PC-3 (cell line): ENCODE measurements at regions of chr14 and their contacts with region 1.

Region 1: DNA sequence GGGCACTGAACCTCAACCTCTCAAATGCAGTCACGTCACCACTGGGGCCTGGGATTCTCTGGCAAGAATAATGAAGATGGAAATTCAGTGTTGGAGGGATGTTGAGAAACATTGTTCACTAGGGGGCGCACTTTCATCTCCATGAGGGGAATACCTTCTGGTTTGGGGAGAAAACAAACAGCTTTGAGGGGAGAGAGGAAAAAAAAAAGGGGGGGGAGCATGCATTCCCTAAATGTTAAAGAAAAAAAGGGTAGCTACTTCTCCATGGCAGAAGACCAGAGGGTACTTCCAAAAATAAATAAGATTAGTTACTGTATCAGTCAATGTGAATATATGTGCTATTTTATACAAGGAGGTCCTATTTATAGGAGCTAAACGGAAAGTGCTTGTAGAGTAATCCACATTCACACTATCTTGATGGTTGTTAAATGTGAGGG is 5.8 kb upstream of the TBPL2 start:
- DNase-seq: peak; percentile 99
- ATAC-seq: peak; percentile 7
- H3K4me3 ChIP-seq: peak overlapping the region; percentile 22; the same call in 1 of the 2 replicates
- H3K27ac ChIP-seq: peak overlapping the region; percentile 81
- H3K4me1 ChIP-seq: peaks cover 54% of the 10 kb centered on the region
- H3K27me3 ChIP-seq: no peaks in the 10 kb centered on the region
- CTCF ChIP-seq: peak; percentile 99

Region 2: GRCh38 chr14:55458800-55459515 is 12.7 kb after region 1 on chr14:
- CTCF ChIA-PET with region 1: interaction called, 4 read pairs
- POLR2A ChIA-PET with region 1: no interaction called
- intact Hi-C with region 1: loop called (anchors 1 kb)
- DNase-seq: peak; percentile 97
- ATAC-seq: peak; percentile 63
- H3K4me3 ChIP-seq: peak overlapping the region; percentile 12
- H3K27ac ChIP-seq: peak overlapping the region; percentile 74
- H3K4me1 ChIP-seq: peaks cover 49% of the 10 kb centered on the region
- H3K27me3 ChIP-seq: no peaks in the 10 kb centered on the region
- CTCF ChIP-seq: no peak

Region 3: GRCh38 chr14:55500219-55500701 is 54.0 kb after region 1 on chr14:
- CTCF ChIA-PET with region 1: no interaction called
- POLR2A ChIA-PET with region 1: no interaction called
- intact Hi-C with region 1: no loop called
- DNase-seq: no peak
- ATAC-seq: no peak
- H3K4me3 ChIP-seq: no peak overlapping the region
- H3K27ac ChIP-seq: no peak overlapping the region
- H3K4me1 ChIP-seq: no peaks in the 10 kb centered on the region
- H3K27me3 ChIP-seq: no peaks in the 10 kb centered on the region
- CTCF ChIP-seq: no peak

Region 4: GRCh38 chr14:55556929-55557623 is 110.8 kb after region 1 on chr14:
- CTCF ChIA-PET with region 1: no interaction called
- POLR2A ChIA-PET with region 1: no interaction called
- intact Hi-C with region 1: no loop called
- DNase-seq: peak; percentile 99
- ATAC-seq: peak; percentile 66
- H3K4me3 ChIP-seq: no peak overlapping the region
- H3K27ac ChIP-seq: no peak overlapping the region
- H3K4me1 ChIP-seq: peaks cover 19% of the 10 kb centered on the region
- H3K27me3 ChIP-seq: no peaks in the 10 kb centered on the region
- CTCF ChIP-seq: no peak

Region 5: GRCh38 chr14:55572578-55572977 is 126.3 kb after region 1 on chr14:
- CTCF ChIA-PET with region 1: interaction called, 5 read pairs
- POLR2A ChIA-PET with region 1: no interaction called
- intact Hi-C with region 1: loop called (anchors 1 kb)
- DNase-seq: peak; percentile 46
- ATAC-seq: peak; percentile 53
- H3K4me3 ChIP-seq: no peak overlapping the region
- H3K27ac ChIP-seq: no peak overlapping the region
- H3K4me1 ChIP-seq: peaks cover 18% of the 10 kb centered on the region
- H3K27me3 ChIP-seq: no peaks in the 10 kb centered on the region
- CTCF ChIP-seq: peak; percentile 28; the same call in 1 of the 2 replicates

Region 6: GRCh38 chr14:55579724-55580469 is 133.7 kb after region 1 on chr14 and contains the start of gene KTN1:
- CTCF ChIA-PET with region 1: interaction called, 9 read pairs
- POLR2A ChIA-PET with region 1: interaction called, 6 read pairs
- intact Hi-C with region 1: loop called (anchors 1 kb)
- DNase-seq: peak; percentile 97
- ATAC-seq: peak; percentile 85
- H3K4me3 ChIP-seq: peak within 1 kb of the TSS; percentile 82
- H3K27ac ChIP-seq: peak within 1 kb of the TSS; percentile 68
- H3K4me1 ChIP-seq: peaks cover 53% of the 10 kb centered on the region
- H3K27me3 ChIP-seq: no peaks in the 10 kb centered on the region
- CTCF ChIP-seq: no peak
- total RNA-seq, gene KTN1: 249 and 251 TPM in 2 replicates

Region 7: GRCh38 chr14:55599200-55599879 is 153.1 kb after region 1 on chr14:
- CTCF ChIA-PET with region 1: interaction called, 3 read pairs
- POLR2A ChIA-PET with region 1: interaction called, 4 read pairs
- intact Hi-C with region 1: loop called (anchors 1 kb)
- DNase-seq: peak; percentile 95
- ATAC-seq: peak; percentile 61
- H3K4me3 ChIP-seq: peak overlapping the region; percentile 66
- H3K27ac ChIP-seq: peak overlapping the region; percentile 88
- H3K4me1 ChIP-seq: peaks cover 36% of the 10 kb centered on the region
- H3K27me3 ChIP-seq: no peaks in the 10 kb centered on the region
- CTCF ChIP-seq: 0 out of 2 replicates have a peak, but pooled peaks have one; percentile 13

Region 8: GRCh38 chr14:55624913-55625312 is 178.7 kb after region 1 on chr14:
- CTCF ChIA-PET with region 1: interaction called, 3 read pairs
- POLR2A ChIA-PET with region 1: no interaction called
- intact Hi-C with region 1: loop called (anchors 1 kb)
- DNase-seq: no peak
- ATAC-seq: no peak
- H3K4me3 ChIP-seq: no peak overlapping the region
- H3K27ac ChIP-seq: no peak overlapping the region
- H3K4me1 ChIP-seq: peaks cover 6% of the 10 kb centered on the region; the same call in 1 of the 2 replicates
- H3K27me3 ChIP-seq: no peaks in the 10 kb centered on the region
- CTCF ChIP-seq: no peak

Region 9: GRCh38 chr14:55689981-55690863 is 244.0 kb after region 1 on chr14:
- CTCF ChIA-PET with region 1: interaction called, 3 read pairs
- POLR2A ChIA-PET with region 1: no interaction called
- intact Hi-C with region 1: loop called (anchors 2 kb)
- DNase-seq: peak; percentile 83
- ATAC-seq: peak; percentile 73
- H3K4me3 ChIP-seq: peak overlapping the region; percentile 7; the same call in 1 of the 2 replicates
- H3K27ac ChIP-seq: peak overlapping the region; percentile 51
- H3K4me1 ChIP-seq: peaks cover 47% of the 10 kb centered on the region
- H3K27me3 ChIP-seq: no peaks in the 10 kb centered on the region
- CTCF ChIP-seq: no peak